H1 (cell line): ENCODE measurements at regions of chr9 and their contacts with region 1.

Region 1: DNA sequence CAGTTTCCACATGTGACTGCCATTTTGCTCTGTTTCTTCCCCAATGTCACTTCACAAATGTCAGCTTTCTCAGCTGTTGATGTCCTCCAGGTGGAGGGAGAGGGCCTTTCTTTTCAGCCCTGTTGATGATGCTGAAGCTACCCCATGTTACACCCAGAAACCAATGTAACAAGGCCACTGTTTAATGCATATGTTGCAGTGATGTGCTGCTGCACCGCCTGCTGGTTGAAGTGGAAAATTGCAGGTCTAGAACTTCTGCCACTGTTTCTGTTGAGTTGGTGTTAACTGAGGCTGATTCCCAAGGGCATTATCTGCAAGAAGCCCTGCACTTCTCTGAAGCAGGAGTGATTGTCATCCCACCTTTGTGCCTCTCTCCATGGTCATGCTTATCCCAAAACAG is 428.4 kb downstream of the KDM4C start:
- DNase-seq: peak in 1 of 2 experiments; percentile 15
- H3K4me3 ChIP-seq: no peak overlapping the region
- H3K27ac ChIP-seq: no peak overlapping the region
- H3K4me1 ChIP-seq: no peaks in the 10 kb centered on the region
- H3K27me3 ChIP-seq: no peaks in the 10 kb centered on the region
- CTCF ChIP-seq: peak; percentile 50 to 89 (median 81)
- EP300 ChIP-seq: no peak
- POLR2A ChIP-seq: no peak
- RAD21 ChIP-seq: peak; percentile 77 to 81

Region 2: DNA sequence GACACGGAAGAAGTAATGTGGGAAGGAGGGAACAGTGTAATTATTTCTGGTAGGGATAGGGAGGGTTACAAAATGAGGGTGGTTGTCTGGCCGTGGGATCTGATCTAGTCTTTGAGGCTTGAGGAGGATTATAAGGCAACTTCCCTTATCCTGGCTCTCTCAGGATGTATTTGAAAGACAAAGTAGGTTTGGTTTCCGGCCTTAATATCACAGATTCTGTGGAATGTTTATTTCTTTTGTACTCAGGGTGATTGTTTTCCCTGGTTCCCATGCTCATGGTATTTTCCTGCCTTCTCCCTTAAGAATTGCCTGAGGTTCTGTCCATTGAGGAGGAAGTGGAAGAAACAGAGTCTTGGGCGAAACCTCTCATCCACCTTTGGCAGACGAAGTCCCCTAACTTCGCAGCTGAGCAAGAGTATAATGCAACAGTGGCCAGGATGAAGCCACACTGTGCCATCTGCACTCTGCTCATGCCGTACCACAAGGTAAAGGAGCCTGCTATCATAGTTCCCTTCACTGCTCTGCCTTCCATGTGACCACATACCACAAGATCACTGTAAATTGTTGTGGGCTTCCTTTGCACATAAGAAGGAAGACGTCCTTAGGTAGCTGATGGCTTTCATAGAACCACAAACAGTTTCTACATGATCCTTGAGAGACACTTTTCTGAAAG is 174.6 kb before region 1 on chr9:
- CTCF ChIA-PET with region 1: no interaction called
- POLR2A ChIA-PET with region 1: no interaction called
- DNase-seq: no peak
- H3K4me3 ChIP-seq: no peak overlapping the region
- H3K27ac ChIP-seq: no peak overlapping the region
- H3K4me1 ChIP-seq: no peaks in the 10 kb centered on the region; a peak in 1 of 7 replicates
- H3K27me3 ChIP-seq: no peaks in the 10 kb centered on the region
- CTCF ChIP-seq: no peak
- EP300 ChIP-seq: no peak
- POLR2A ChIP-seq: no peak
- RAD21 ChIP-seq: no peak

Region 3: DNA sequence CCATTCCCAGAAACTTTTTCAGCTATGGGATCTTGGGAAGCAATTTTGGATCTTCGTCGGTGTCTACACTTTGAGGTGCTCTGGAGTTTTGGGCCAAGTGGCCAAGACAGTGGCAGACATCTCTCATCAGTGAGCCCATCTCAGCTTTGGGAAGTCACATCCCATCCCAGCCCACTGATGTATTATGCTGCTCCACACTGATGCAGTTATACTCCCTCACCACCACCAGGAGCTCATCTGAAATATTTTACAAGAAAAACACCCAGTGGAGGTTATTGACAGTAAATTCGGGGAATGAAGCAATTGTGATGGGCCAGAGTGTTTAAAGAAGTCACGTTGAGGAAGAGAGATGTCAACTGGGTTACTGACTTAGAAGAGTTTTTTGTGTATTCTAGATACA is 50.4 kb before region 1 on chr9:
- CTCF ChIA-PET with region 1: no interaction called
- POLR2A ChIA-PET with region 1: no interaction called
- DNase-seq: no peak
- H3K4me3 ChIP-seq: no peak overlapping the region
- H3K27ac ChIP-seq: no peak overlapping the region
- H3K4me1 ChIP-seq: no peaks in the 10 kb centered on the region
- H3K27me3 ChIP-seq: no peaks in the 10 kb centered on the region
- CTCF ChIP-seq: no peak
- EP300 ChIP-seq: no peak
- POLR2A ChIP-seq: no peak
- RAD21 ChIP-seq: no peak

Region 4: GRCh38 chr9:7165349-7165975 is 20.7 kb before region 1 on chr9:
- CTCF ChIA-PET with region 1: interaction called, 15 read pairs
- POLR2A ChIA-PET with region 1: no interaction called
- DNase-seq: no peak
- H3K4me3 ChIP-seq: no peak overlapping the region
- H3K27ac ChIP-seq: no peak overlapping the region
- H3K4me1 ChIP-seq: no peaks in the 10 kb centered on the region; a peak in 1 of 7 replicates
- H3K27me3 ChIP-seq: no peaks in the 10 kb centered on the region
- CTCF ChIP-seq: no peak
- EP300 ChIP-seq: no peak
- POLR2A ChIP-seq: no peak
- RAD21 ChIP-seq: no peak

Region 5: DNA sequence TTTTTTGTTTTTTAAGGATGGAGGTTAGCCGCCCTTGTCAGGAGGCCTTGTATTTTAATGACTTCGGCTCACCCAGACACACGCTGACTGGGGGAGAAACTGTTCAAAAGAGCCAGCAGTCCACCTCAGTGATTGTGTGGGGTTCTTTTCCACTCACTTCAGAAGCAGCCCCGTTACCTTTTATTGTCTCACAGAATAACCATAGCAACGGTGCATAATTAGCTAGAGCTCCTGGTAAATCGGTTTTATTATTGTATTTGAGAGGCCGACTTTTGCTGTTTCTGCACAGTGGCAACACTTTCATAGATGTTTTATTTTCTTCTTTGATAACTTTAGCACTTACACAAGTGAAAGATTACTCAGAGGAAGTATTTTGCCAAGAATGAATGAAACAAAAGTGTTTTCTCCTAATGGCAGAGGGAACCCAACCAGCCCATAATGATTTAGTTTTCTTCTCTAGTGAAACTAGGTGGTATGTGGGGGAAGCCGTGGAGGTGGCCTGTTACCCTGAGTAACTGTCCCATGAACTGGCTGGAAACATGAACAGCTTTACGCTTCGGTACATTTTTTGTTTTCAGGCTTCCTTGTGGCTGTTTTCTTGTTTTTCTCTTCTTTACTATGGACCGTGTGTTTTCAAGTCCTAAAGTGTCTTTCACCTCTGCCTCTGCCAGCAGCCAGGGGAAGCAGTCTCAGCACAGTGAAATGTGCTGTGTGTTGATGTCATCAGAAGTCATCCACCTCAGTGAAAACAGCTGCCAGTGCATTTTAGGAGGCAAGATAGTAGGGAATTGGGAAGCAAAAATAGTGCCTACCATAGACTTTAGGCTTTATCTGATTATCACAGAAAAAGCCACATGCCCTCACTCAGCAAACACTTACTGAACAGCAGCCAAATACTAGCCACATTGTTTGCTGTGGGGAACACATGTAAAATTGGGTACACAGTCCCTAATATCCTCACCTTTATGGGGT is 13.7 kb before region 1 on chr9:
- CTCF ChIA-PET with region 1: interaction called, 24 read pairs
- POLR2A ChIA-PET with region 1: interaction called, 4 read pairs
- DNase-seq: no peak
- H3K4me3 ChIP-seq: no peak overlapping the region
- H3K27ac ChIP-seq: no peak overlapping the region; the same call in 1 of the 2 replicates
- H3K4me1 ChIP-seq: peaks cover 0 to 6% (median 4%) of the 10 kb centered on the region in 4 experiments; a peak in 4 of 7 replicates
- H3K27me3 ChIP-seq: no peaks in the 10 kb centered on the region
- CTCF ChIP-seq: no peak
- EP300 ChIP-seq: no peak
- POLR2A ChIP-seq: no peak
- RAD21 ChIP-seq: no peak

Region 6: DNA sequence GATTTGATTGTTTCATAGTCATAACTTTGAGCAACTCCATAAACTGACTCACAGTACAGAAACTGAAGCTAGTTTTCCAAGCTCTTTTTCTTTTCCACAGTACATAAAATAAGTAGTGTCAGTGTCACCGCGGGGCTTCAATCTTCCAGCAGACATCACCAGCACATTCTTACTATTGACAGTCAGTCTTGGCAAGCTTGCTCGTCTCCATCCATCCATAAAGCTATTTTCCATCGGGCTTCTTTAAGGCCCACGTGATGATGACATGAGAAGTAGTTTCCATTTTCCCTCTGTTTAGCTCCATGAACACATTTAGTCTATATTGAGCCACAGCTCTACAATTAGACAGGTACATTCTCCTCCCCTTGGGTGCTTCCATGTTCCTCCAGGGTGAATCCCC is 15.0 kb after region 1 on chr9:
- CTCF ChIA-PET with region 1: interaction called, 20 read pairs
- POLR2A ChIA-PET with region 1: no interaction called
- DNase-seq: no peak
- H3K4me3 ChIP-seq: no peak overlapping the region
- H3K27ac ChIP-seq: no peak overlapping the region
- H3K4me1 ChIP-seq: peaks cover 0 to 3% (median 0%) of the 10 kb centered on the region in 4 experiments; a peak in 1 of 7 replicates
- H3K27me3 ChIP-seq: no peaks in the 10 kb centered on the region
- CTCF ChIP-seq: no peak
- EP300 ChIP-seq: no peak
- POLR2A ChIP-seq: no peak
- RAD21 ChIP-seq: no peak

Region 7: DNA sequence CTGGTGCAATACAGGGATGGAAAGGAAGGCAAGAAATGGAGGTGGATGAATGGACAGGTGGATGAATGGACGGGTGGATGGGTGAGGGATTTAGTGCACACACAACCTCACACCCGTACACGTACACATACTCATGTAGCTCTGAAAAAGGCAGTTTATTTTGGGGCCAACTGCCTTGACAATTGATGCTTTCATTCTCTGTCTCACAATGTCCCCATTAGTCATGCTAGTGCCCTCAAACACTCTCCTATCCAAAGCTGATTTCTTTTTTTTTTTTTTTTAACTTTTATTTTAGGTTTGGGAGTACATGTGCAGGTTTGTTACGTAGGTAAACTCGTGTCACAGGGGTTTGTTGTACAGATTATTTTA is 118.4 kb after region 1 on chr9:
- CTCF ChIA-PET with region 1: no interaction called
- POLR2A ChIA-PET with region 1: no interaction called
- DNase-seq: no peak
- H3K4me3 ChIP-seq: no peak overlapping the region
- H3K27ac ChIP-seq: no peak overlapping the region
- H3K4me1 ChIP-seq: no peaks in the 10 kb centered on the region
- H3K27me3 ChIP-seq: no peaks in the 10 kb centered on the region
- CTCF ChIP-seq: no peak
- EP300 ChIP-seq: no peak
- POLR2A ChIP-seq: no peak
- RAD21 ChIP-seq: no peak